ENCODE measurements at regions of chr17 and their contacts with region 1.

Region 1: GRCh38 chr17:69235338-69235930 is 6.8 kb upstream of the ABCA10 start:
- DNase-seq: peak; percentile 76 to 82 (median 76)
- ATAC-seq: peak; percentile 62
- H3K4me3 ChIP-seq: no peak overlapping the region
- H3K27ac ChIP-seq: no peak overlapping the region
- H3K4me1 ChIP-seq: no peaks in the 10 kb centered on the region
- H3K27me3 ChIP-seq: no peaks in the 10 kb centered on the region
- CTCF ChIP-seq: peak; percentile 33 to 78 (median 69)
- POLR2A ChIP-seq: no peak

Region 2: GRCh38 chr17:68777243-68777855 is 458.1 kb before region 1 on chr17:
- intact Hi-C with region 1: loop called (anchors 5 kb)
- DNase-seq: peak; percentile 54 to 67 (median 65)
- ATAC-seq: peak; percentile 65
- H3K4me3 ChIP-seq: no peak overlapping the region
- H3K27ac ChIP-seq: peak overlapping the region in 1 of 4 donors; percentile 9
- H3K4me1 ChIP-seq: peaks cover 17% of the 10 kb centered on the region
- H3K27me3 ChIP-seq: no peaks in the 10 kb centered on the region
- CTCF ChIP-seq: peak; percentile 52 to 85 (median 72)
- POLR2A ChIP-seq: no peak

Region 3: DNA sequence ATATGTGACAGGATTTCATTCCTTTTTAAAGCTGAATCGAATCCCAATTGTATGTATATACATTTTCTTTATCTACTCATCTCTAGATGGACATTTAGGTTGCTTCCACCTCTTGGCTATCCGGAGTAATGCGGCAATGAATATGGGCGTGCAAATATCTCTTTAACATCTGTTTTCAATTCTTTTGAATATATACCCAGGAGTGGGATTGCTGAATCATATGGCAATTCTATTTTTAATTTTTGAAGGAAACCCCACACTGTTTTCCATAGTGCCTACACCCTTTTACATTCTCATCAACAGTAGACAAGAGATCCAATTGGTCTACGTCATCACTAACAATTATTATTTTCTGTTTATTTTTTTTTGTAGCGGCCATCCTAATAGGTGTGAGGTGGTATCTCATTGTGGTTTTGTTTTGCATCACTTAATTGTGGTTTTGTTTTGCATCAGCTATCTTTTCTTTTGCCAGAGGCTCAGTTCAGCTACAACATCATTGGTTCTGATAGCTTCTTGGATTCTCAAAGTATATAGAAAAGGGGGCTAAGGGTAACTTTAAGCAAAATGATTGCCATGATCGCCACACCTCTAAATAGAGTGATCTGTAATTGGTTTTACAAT is 153.5 kb after region 1 on chr17:
- intact Hi-C with region 1: no loop called
- DNase-seq: no peak
- ATAC-seq: no peak
- H3K4me3 ChIP-seq: no peak overlapping the region
- H3K27ac ChIP-seq: no peak overlapping the region
- H3K4me1 ChIP-seq: peaks cover 18% of the 10 kb centered on the region
- H3K27me3 ChIP-seq: no peaks in the 10 kb centered on the region
- CTCF ChIP-seq: no peak
- POLR2A ChIP-seq: no peak

Measured in body of pancreas (tissue), 4 donors.